ENCODE measurements at regions of chr11 and their contacts with region 1.

Region 1: DNA sequence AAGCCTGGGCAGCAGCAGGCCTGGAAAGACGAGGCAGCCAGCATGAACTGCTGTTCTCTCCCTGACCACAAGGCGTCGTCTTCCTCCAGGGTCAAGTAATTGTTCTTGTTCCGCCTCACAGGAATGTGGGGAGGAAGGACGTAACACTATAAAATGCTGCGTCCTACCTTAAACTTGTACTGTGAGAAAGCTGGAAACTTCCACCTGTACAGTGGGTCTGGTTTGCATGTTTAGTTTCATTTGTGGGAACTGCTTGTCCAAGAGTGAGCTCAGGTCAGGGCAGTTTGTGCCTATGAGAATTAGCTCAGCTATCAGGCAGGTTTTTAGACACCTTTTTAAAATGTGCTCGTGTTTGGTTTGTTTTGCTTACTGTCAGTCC is 55.2 kb downstream of the PANX1 start:
- DNase-seq: peak; percentile 75
- H3K4me3 Mint-ChIP-seq: no peak overlapping the region
- H3K27ac Mint-ChIP-seq: no peak overlapping the region
- H3K4me1 Mint-ChIP-seq: peaks cover 7% of the 10 kb centered on the region
- H3K27me3 Mint-ChIP-seq: no peaks in the 10 kb centered on the region
- CTCF ChIP-seq: peak; percentile 91

Region 2: GRCh38 chr11:93921695-93922468 is 262.0 kb before region 1 on chr11:
- CTCF ChIA-PET with region 1: interaction called, 44 read pairs
- POLR2A ChIA-PET with region 1: no interaction called
- intact Hi-C with region 1: loop called (anchors 2 kb)
- DNase-seq: peak; percentile 84
- H3K4me3 Mint-ChIP-seq: no peak overlapping the region
- H3K27ac Mint-ChIP-seq: no peak overlapping the region
- H3K4me1 Mint-ChIP-seq: no peaks in the 10 kb centered on the region
- H3K27me3 Mint-ChIP-seq: no peaks in the 10 kb centered on the region
- CTCF ChIP-seq: peak; percentile 78

Region 3: GRCh38 chr11:93974759-93975158 is 209.1 kb before region 1 on chr11:
- CTCF ChIA-PET with region 1: no interaction called
- POLR2A ChIA-PET with region 1: no interaction called
- intact Hi-C with region 1: no loop called
- DNase-seq: no peak
- H3K4me3 Mint-ChIP-seq: no peak overlapping the region
- H3K27ac Mint-ChIP-seq: no peak overlapping the region
- H3K4me1 Mint-ChIP-seq: no peaks in the 10 kb centered on the region
- H3K27me3 Mint-ChIP-seq: peaks cover 15% of the 10 kb centered on the region
- CTCF ChIP-seq: no peak

Region 4: DNA sequence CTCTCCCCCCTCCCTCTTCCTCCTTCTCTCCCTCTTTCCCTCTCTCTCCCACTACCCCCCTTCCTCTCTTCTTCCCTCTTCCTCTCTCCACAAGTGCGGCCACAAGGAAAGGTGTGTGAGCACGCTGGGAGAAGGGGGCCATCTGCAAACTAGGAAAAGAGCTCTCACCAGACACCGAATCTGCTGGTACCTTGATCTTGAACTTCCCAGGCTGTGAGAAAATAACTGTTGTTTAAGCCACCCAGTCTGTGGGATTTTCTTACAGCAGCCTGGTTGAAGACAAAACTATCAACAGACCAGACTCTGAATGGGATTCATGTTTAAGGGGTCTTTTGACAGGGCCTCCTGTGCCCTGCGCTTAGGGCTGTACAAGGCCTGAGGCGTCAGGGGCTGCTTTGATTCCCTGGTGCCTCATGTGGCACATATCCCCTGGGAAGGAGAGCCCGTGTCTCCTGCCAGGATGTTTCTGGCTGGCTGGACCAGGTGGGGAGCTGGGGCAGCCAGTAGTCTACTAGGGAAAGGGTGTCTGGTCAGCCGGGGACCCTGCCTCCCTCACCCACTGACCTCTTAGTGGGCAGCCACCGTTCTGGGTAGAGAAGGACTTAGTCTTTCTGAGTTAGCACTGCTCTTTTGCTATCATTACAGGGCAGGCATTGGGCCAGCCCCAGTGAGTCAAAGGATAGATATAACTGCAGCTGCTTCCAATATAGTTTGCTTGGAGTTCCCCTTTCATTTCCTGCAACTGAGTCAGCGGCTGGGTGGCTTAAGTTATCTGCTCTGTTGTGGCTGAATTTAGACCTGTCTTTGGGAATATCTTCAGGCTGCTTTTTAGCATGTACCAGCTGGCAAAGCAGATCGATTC is 49.0 kb before region 1 on chr11:
- CTCF ChIA-PET with region 1: interaction called, 28 read pairs
- POLR2A ChIA-PET with region 1: interaction called, 4 read pairs
- intact Hi-C with region 1: loop called (anchors 5 kb)
- DNase-seq: peak; percentile 87
- H3K4me3 Mint-ChIP-seq: peak overlapping the region; percentile 46
- H3K27ac Mint-ChIP-seq: no peak overlapping the region
- H3K4me1 Mint-ChIP-seq: peaks cover 20% of the 10 kb centered on the region
- H3K27me3 Mint-ChIP-seq: no peaks in the 10 kb centered on the region
- CTCF ChIP-seq: no peak

Region 5: GRCh38 chr11:94219771-94220170 is 35.9 kb after region 1 on chr11:
- CTCF ChIA-PET with region 1: interaction called, 11 read pairs
- POLR2A ChIA-PET with region 1: no interaction called
- intact Hi-C with region 1: no loop called
- DNase-seq: no peak
- H3K4me3 Mint-ChIP-seq: no peak overlapping the region
- H3K27ac Mint-ChIP-seq: no peak overlapping the region
- H3K4me1 Mint-ChIP-seq: no peaks in the 10 kb centered on the region
- H3K27me3 Mint-ChIP-seq: peaks cover under 1% of the 10 kb centered on the region
- CTCF ChIP-seq: no peak

Region 6: DNA sequence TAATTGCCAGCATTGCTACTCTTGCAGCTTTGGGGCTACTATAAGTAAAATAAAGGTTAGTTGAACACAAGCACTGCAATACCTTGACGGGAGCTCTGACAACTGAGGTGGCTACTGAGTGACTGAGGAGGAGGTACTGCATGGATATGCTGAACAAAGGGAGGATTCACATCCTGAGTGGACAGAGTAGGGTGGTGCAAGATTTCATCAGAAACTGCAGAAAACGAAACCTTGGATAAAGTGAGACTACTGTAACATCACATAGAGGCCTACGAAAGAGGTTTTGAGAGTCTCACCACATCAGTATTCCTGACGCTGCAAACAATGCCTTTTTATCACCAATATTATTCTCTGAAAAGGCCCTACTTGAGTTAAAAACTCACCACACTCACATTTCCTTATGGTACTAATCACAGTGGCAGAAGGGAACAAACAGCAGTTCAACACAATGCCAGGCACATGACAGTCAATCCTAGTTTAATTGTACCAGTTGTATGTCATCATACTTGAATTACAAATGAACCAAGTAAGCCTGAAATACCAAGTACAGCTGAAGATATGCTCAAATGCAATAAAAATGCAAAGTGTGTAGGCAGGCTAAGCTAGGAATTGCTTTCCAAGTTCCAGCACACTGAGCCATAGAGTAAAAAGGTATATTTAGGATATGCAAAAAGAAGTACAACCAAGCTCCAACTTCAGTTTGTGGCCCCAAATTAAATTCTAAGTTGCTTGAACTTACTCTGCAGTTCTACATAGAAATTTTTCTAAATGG is 221.4 kb after region 1 on chr11:
- CTCF ChIA-PET with region 1: interaction called, 11 read pairs
- POLR2A ChIA-PET with region 1: no interaction called
- intact Hi-C with region 1: no loop called
- DNase-seq: no peak
- H3K4me3 Mint-ChIP-seq: no peak overlapping the region
- H3K27ac Mint-ChIP-seq: no peak overlapping the region
- H3K4me1 Mint-ChIP-seq: no peaks in the 10 kb centered on the region
- H3K27me3 Mint-ChIP-seq: peaks cover 11% of the 10 kb centered on the region
- CTCF ChIP-seq: no peak

Region 7: DNA sequence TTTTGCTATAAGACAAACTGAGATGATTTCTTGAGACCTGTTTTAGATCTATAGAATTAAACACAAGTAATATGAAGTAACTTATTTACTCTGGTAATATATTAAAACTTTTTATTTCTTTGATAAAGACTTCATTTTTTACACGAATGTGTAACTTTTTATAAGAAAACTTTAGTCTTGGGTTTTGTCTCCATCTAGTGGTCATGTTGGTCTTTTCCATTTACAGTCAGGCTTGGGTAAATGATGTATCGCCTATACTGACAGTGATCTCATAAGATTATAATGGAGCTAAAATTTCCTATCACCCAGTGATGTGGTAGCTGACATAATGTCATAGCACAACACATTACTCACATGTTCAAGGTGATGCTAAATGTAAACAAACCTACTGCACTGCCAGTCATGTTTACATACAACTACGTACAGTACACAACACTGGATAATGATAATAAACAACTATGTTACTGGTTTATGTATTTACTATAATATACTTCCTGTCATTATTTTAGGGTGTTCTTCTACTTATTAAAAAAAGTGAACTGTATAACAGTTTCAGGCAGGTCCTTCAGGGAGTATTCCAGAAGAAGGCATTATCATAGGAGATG is 320.9 kb after region 1 on chr11:
- CTCF ChIA-PET with region 1: interaction called, 15 read pairs
- POLR2A ChIA-PET with region 1: interaction called, 3 read pairs
- intact Hi-C with region 1: loop called (anchors 2 kb)
- DNase-seq: peak; percentile 61
- H3K4me3 Mint-ChIP-seq: no peak overlapping the region
- H3K27ac Mint-ChIP-seq: no peak overlapping the region
- H3K4me1 Mint-ChIP-seq: no peaks in the 10 kb centered on the region
- H3K27me3 Mint-ChIP-seq: no peaks in the 10 kb centered on the region
- CTCF ChIP-seq: peak; percentile 34